ENCODE measurements at regions of chr1 and their contacts with region 1.

Region 1: DNA sequence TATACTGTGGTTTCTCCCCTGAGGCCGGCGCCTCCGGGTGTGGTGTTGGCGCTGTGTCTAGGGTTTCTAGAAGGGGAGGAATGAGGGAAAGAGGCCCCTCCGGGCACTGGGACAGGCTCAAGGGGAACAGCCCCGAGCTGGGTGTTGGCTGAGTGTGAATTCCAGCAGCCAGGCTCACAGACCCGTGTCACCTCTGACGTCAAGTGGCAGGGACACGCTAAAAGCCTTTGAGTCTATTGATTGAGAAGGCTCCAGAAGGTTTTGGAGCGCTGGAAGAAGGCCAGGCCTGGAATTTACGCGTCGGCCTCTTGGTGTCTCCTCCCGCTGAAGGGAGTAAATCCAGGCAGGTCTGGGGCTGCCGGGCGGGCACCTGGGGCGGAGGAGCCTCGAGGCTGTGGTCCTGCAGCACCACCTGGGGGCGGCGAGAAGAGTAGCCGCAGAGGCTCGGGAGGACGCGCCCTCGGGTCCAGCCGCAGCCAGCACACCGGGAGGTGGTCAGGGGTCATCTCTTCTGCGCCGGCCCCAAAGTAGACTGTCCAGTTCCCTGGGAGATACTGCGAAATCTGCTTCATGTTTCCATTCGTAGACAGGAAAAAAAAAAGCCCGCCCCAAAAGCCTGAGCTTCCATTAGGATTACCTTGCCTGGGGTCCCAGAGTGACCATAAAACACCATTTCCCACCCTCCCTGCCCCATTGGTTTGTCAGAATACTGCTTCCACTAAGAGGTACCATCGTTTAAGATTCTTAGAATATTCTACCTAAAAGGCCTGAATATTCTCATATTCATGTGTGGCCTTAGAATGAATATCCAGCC is 61.7 kb downstream of the TLR5 start:
- DNase-seq: peak; percentile 81
- ATAC-seq: peak; percentile 100
- H3K4me3 Mint-ChIP-seq: peak overlapping the region; percentile 56
- H3K27ac Mint-ChIP-seq: no peak overlapping the region
- H3K4me1 Mint-ChIP-seq: no peaks in the 10 kb centered on the region
- H3K27me3 Mint-ChIP-seq: no peaks in the 10 kb centered on the region
- CTCF ChIP-seq: peak; percentile 94

Region 2: DNA sequence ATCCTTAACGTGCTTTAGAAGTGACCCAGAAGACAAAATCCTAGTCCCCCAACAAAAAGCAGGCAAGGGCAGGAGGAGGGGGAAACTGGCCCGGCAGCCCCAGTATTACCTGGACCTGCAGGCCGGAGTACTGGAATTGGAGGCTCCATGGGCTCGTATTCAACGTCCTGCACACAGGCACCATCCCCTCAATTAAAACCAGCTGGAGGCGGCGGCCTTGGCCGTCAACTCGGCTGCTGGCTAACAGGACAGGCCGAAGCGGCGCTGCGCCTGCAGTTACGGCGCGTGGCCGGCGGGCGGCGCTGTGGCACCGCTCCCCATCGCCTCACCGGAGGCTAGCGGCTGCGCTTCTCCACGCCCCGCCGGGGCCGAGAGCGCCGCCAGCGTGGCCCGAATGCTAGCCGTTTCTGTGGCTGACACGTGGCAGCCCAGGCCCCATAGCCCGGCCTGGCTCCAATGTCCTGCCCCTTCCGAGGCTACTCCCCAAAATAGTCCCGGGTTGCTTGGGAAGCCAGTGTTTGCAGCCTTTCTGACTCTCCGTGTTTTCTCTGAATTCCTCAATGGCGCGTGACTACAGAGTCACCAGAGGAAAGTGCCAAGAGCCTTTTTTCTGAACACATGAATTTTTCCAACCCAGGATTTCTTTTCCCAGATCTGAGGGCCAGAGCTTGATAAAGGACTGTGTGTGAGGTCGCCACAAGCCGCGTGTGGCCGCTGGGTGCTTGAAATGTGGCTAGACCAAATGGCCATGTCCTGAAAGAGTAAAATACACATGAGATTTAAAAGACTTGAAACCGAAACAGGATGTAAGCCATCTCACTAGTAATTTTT is 616.0 kb before region 1 on chr1:
- CTCF ChIA-PET with region 1: interaction called, 5 read pairs
- POLR2A ChIA-PET with region 1: no interaction called
- intact Hi-C with region 1: loop called (anchors 10 kb)
- DNase-seq: peak; percentile 81
- ATAC-seq: peak; percentile 98
- H3K4me3 Mint-ChIP-seq: peak overlapping the region; percentile 67
- H3K27ac Mint-ChIP-seq: peak overlapping the region; percentile 88
- H3K4me1 Mint-ChIP-seq: peaks cover 8% of the 10 kb centered on the region
- H3K27me3 Mint-ChIP-seq: no peaks in the 10 kb centered on the region
- CTCF ChIP-seq: peak; percentile 99

Region 3: GRCh38 chr1:222739465-222739864 is 341.9 kb before region 1 on chr1:
- CTCF ChIA-PET with region 1: interaction called, 6 read pairs
- POLR2A ChIA-PET with region 1: no interaction called
- intact Hi-C with region 1: loop called (anchors 2 kb)
- DNase-seq: no peak
- ATAC-seq: no peak
- H3K4me3 Mint-ChIP-seq: no peak overlapping the region
- H3K27ac Mint-ChIP-seq: no peak overlapping the region
- H3K4me1 Mint-ChIP-seq: no peaks in the 10 kb centered on the region
- H3K27me3 Mint-ChIP-seq: no peaks in the 10 kb centered on the region
- CTCF ChIP-seq: no peak

Region 4: DNA sequence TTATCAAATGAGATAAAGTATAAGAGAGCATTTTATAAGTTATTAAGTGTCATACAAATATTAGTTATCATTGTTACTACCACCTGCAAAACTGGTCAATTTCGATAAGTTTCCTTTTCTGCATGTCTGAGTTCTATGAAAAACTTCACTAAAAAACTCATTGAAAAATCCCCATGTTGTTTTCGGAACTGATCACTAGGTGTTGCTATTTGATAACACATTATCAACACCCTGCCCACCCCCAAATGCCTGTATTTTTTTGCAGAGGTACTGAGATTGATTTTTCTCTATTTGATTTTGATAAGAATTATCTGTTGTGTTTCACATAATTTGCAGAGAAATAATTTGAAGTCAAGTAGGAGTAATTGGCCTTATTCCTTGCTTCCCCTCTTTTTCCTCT is 288.6 kb before region 1 on chr1:
- CTCF ChIA-PET with region 1: interaction called, 10 read pairs
- POLR2A ChIA-PET with region 1: no interaction called
- intact Hi-C with region 1: loop called (anchors 2 kb)
- DNase-seq: no peak
- ATAC-seq: no peak
- H3K4me3 Mint-ChIP-seq: no peak overlapping the region
- H3K27ac Mint-ChIP-seq: no peak overlapping the region
- H3K4me1 Mint-ChIP-seq: peaks cover 22% of the 10 kb centered on the region
- H3K27me3 Mint-ChIP-seq: no peaks in the 10 kb centered on the region
- CTCF ChIP-seq: peak; percentile 70

Region 5: GRCh38 chr1:222861062-222861461 is 220.3 kb before region 1 on chr1:
- CTCF ChIA-PET with region 1: no interaction called
- POLR2A ChIA-PET with region 1: no interaction called
- intact Hi-C with region 1: no loop called
- DNase-seq: no peak
- ATAC-seq: no peak
- H3K4me3 Mint-ChIP-seq: no peak overlapping the region
- H3K27ac Mint-ChIP-seq: no peak overlapping the region
- H3K4me1 Mint-ChIP-seq: peaks cover 9% of the 10 kb centered on the region
- H3K27me3 Mint-ChIP-seq: no peaks in the 10 kb centered on the region
- CTCF ChIP-seq: no peak